Activated CD4-positive, alpha-beta memory T cell treated with anti-CD3 and anti-CD28 coated beads, Interleukin-2, amount 10 ng/mL, durations not matched to agents 7 days and 5 days (primary cell): ENCODE measurements at regions of chr7 and their contacts with region 1.

Region 1: DNA sequence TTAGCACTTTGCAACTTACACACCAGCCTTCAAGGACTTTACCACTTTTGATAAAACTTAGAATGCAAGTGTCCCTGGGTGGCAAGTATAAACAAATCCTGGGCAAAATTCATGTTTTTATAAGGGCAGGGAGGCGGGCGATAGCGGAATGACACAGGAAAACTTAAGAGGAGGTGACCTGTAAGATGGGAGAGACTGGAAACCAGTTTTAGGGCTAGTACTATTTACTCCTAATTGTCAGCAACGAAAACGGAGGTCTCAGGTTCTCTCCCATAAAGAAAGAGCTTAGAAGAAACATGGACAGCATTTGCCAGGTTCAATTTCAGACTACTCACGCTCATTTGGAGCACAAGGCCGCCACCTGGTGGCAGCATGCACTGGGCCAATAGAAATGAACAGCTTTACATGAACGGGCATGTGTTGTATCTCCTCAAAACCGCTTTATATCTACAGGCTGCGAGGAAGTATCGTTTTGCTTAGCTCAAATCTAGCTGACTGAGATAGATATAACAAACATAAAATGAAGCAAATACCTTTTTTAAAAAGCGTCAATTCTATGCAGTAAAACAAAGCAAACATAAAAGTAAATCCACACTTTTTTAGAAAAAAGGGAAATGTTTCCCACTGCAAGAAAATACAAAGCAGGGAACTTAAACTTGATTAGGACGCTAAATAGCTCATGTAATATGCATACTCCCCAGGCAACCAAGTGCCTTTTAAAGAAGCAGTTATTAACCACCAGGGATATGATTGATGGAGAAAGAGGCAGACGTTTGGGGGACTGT is 37.6 kb upstream of the SVOPL start:
- DNase-seq: peak; percentile 87
- H3K4me3 Mint-ChIP-seq: no peak overlapping the region
- H3K27ac Mint-ChIP-seq: no peak overlapping the region
- H3K4me1 Mint-ChIP-seq: peaks cover 8% of the 10 kb centered on the region
- H3K27me3 Mint-ChIP-seq: peaks cover 6% of the 10 kb centered on the region

Region 2: GRCh38 chr7:138161600-138162081 is 577.1 kb before region 1 on chr7:
- CTCF ChIA-PET with region 1: interaction called, 77 read pairs
- POLR2A ChIA-PET with region 1: interaction called, 5 read pairs
- DNase-seq: peak; percentile 74
- H3K4me3 Mint-ChIP-seq: no peak overlapping the region
- H3K27ac Mint-ChIP-seq: no peak overlapping the region
- H3K4me1 Mint-ChIP-seq: no peaks in the 10 kb centered on the region
- H3K27me3 Mint-ChIP-seq: peaks cover 2% of the 10 kb centered on the region

Region 3: DNA sequence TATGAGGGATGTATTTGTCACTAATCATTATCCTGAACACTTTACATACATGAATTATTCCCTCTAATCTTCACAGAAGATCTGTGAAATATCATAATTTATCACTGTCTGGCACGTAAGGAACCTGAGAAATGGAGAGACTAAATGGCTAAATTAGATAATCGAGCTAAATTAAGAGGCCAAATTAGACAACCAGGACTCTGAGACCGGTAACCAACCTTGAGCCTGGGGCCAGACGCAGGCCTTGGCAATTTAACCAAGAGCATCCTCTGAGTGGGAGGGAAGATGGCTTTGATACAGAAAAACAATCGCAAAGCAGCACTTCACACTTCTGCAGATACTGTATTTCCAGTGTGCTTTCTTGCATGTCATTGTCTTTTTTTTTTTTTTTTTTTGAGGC is 59.0 kb before region 1 on chr7:
- CTCF ChIA-PET with region 1: no interaction called
- POLR2A ChIA-PET with region 1: no interaction called
- DNase-seq: no peak
- H3K4me3 Mint-ChIP-seq: no peak overlapping the region
- H3K27ac Mint-ChIP-seq: no peak overlapping the region
- H3K4me1 Mint-ChIP-seq: no peaks in the 10 kb centered on the region
- H3K27me3 Mint-ChIP-seq: peaks cover 9% of the 10 kb centered on the region

Region 4: DNA sequence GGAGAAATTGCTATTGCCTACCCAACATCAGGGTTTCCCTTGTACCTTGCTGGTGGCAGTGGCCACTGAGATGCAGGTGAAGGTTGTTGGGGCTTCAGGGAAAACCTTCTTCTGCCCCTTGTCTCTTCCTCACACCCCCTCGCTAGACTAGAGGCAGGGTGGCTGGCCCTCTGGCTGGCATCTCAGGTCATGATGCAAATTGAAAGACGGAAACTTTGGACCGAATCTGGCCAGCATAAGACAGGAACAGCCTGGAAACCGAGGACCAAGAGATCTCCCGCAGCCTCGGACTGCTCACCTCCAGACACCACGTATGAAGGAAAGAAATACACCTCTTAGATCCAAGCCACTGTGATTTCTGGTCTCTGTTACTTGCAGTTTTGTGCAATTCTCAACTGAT is 40.5 kb before region 1 on chr7:
- CTCF ChIA-PET with region 1: no interaction called
- POLR2A ChIA-PET with region 1: no interaction called
- DNase-seq: no peak
- H3K4me3 Mint-ChIP-seq: no peak overlapping the region
- H3K27ac Mint-ChIP-seq: no peak overlapping the region
- H3K4me1 Mint-ChIP-seq: no peaks in the 10 kb centered on the region
- H3K27me3 Mint-ChIP-seq: peaks cover 3% of the 10 kb centered on the region

Region 5: DNA sequence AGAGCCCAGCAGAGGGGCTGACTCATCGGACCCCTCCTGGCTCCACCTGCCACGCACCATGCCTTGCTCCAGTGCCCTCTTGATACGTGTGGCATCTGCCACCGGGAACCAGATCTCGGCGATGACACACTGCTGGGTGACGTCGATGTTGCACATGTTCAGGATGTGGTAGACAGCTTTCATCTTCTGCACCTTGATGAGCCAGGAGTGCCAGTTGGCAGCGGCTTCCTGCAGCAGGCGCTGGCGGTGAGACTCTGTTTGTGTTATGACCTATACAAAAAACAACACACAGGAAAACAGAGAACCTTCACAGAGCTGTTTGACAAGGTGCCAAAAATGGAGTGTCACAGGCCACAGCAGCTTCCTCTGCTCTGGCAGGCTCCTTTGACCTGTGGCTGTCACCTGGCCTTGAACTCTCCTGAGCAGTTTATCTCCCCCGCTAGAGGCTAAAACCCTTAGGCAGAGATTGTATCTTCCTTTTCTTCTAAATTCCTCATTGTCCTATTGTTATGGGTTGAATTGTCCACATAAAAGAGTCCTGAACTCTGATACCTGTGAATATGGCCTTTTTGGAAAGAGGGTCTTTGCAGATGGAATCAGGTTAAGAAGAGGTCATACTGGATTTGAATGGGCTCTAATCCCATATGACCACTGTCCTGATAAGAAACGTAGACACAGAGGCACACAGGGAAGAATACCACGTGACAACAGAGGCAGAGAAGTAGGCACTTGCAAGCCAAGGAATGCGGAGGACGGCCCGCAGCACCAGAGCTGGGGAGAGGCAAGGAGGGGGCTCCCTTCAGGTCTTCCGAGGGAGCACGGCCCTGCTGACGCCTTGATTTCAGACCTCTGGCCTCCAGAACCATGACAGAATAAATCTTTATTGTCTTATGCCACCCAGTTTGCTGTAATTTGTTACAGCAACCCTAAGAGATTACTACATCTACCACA is 14.1 kb after region 1 on chr7:
- CTCF ChIA-PET with region 1: interaction called, 20 read pairs
- POLR2A ChIA-PET with region 1: no interaction called
- DNase-seq: peak; percentile 96
- H3K4me3 Mint-ChIP-seq: no peak overlapping the region
- H3K27ac Mint-ChIP-seq: peak overlapping the region; percentile 91
- H3K4me1 Mint-ChIP-seq: peaks cover 73% of the 10 kb centered on the region
- H3K27me3 Mint-ChIP-seq: no peaks in the 10 kb centered on the region

Region 6: DNA sequence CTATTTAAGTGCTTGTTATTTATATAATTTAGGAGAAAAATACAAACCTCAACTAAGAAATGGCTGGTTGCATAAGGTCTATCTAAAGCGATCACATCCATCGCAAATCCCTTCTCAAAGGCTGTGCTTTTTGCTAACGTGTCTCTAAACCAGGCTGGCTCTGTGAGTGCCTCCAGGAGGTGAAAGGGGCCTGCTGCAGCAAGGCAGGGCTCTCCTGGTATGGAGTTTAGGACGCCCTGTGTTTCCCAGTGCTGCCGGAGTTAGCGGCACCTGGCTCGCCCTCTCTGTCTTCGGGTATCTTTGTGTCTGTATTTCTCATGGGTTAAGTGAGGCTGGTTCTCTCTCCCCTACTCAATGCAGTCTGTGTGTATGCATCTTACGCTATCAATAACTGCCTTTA is 127.6 kb after region 1 on chr7:
- CTCF ChIA-PET with region 1: interaction called, 11 read pairs
- POLR2A ChIA-PET with region 1: no interaction called
- DNase-seq: no peak
- H3K4me3 Mint-ChIP-seq: no peak overlapping the region
- H3K27ac Mint-ChIP-seq: no peak overlapping the region
- H3K4me1 Mint-ChIP-seq: peaks cover 21% of the 10 kb centered on the region
- H3K27me3 Mint-ChIP-seq: peaks cover 2% of the 10 kb centered on the region